ENCODE measurements at regions of chr11 and their contacts with region 1.

Region 1: GRCh38 chr11:116787786-116788486 is at the start of gene ZPR1:
- DNase-seq: peak; percentile 46 to 91
- H3K4me3 ChIP-seq: peak within 1 kb of the TSS; percentile 92 to 93
- H3K27ac ChIP-seq: peak within 1 kb of the TSS; percentile 77 to 90
- H3K4me1 ChIP-seq: peaks cover 0 to 14% of the 10 kb centered on the region in 2 donors
- H3K27me3 ChIP-seq: no peaks in the 10 kb centered on the region
- CTCF ChIP-seq: no peak
- total RNA-seq, gene ZPR1: 171 TPM

Region 2: GRCh38 chr11:115645625-115646317 is 1142.2 kb before region 1 on chr11:
- intact Hi-C with region 1: no loop called
- DNase-seq: no peak
- H3K4me3 ChIP-seq: no peak overlapping the region
- H3K27ac ChIP-seq: no peak overlapping the region
- H3K4me1 ChIP-seq: no peaks in the 10 kb centered on the region
- H3K27me3 ChIP-seq: no peaks in the 10 kb centered on the region
- CTCF ChIP-seq: no peak

Region 3: GRCh38 chr11:116641561-116642045 is 146.3 kb before region 1 on chr11:
- intact Hi-C with region 1: no loop called
- DNase-seq: no peak
- H3K4me3 ChIP-seq: no peak overlapping the region
- H3K27ac ChIP-seq: no peak overlapping the region
- H3K4me1 ChIP-seq: no peaks in the 10 kb centered on the region
- H3K27me3 ChIP-seq: no peaks in the 10 kb centered on the region
- CTCF ChIP-seq: peak in 1 of 3 experiments; percentile 53

Region 4: GRCh38 chr11:116772443-116773202 is 15.3 kb before region 1 on chr11 and contains the start of gene BUD13:
- intact Hi-C with region 1: loop called (anchors 1 kb)
- DNase-seq: peak; percentile 27 to 91
- H3K4me3 ChIP-seq: peak within 1 kb of the TSS; percentile 71 to 82
- H3K27ac ChIP-seq: peak within 1 kb of the TSS; percentile 88 to 94
- H3K4me1 ChIP-seq: peaks cover 0 to 14% of the 10 kb centered on the region in 2 donors
- H3K27me3 ChIP-seq: no peaks in the 10 kb centered on the region
- CTCF ChIP-seq: peak in 1 of 3 experiments; percentile 15
- total RNA-seq, gene BUD13: 23.9 TPM

Region 5: DNA sequence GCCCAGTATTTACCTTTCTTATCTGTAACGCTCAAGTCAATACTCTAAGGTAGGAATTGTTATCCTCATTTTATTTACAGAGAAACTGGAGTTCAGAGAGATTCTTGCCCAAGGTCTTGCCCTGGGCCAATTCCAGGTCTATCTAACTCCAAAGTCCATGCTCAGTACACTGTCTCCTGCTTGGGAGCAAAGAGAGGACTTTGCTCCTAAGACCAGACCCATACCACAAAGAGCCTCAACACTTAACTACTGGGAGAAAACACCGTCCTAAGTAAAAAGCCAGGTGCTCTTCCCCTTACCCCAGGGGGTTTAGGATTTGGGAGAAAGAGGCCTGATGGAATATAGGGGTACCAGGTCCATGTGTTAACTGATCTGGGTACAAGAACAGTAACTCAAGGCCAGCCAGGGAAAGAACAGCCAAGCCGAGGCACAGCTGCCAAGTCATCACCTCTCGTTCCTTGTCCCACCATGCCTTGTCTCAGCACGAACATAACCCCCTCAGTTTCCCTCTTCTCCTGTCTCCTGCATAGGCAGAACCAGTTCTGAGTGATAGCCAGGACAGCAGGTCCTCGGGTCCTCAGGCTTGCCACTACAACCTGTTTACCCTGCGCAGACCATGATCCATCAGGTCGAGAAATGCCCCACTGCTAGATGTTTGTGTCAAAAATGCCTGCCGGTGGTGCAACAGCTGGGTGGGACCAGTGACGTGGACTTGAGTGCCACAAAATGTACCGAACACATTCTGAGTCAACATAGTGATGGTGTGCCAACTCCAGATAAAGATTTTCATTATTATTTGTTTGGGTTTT is 20.7 kb after region 1 on chr11:
- intact Hi-C with region 1: no loop called
- DNase-seq: no peak
- H3K4me3 ChIP-seq: no peak overlapping the region
- H3K27ac ChIP-seq: peak overlapping the region in 1 of 2 donors; percentile 12
- H3K4me1 ChIP-seq: no peaks in the 10 kb centered on the region
- H3K27me3 ChIP-seq: no peaks in the 10 kb centered on the region
- CTCF ChIP-seq: no peak

Region 6: GRCh38 chr11:117098269-117099232 is 310.6 kb after region 1 on chr11 and contains the start of gene SIK3:
- intact Hi-C with region 1: loop called (anchors 1 kb)
- DNase-seq: peak; percentile 62 to 96
- H3K4me3 ChIP-seq: peak within 1 kb of the TSS; percentile 99
- H3K27ac ChIP-seq: peak within 1 kb of the TSS; percentile 90 to 99
- H3K4me1 ChIP-seq: peaks cover 4 to 32% of the 10 kb centered on the region in 2 donors
- H3K27me3 ChIP-seq: no peaks in the 10 kb centered on the region
- CTCF ChIP-seq: peak; percentile 29 to 52 (median 49)
- total RNA-seq, gene SIK3: 22.5 TPM

Region 7: GRCh38 chr11:117143871-117144476 is 356.0 kb after region 1 on chr11 and contains the start of gene PAFAH1B2:
- intact Hi-C with region 1: loop called (anchors 1 kb)
- DNase-seq: peak; percentile 81 to 97
- H3K4me3 ChIP-seq: peak within 1 kb of the TSS; percentile 92 to 98
- H3K27ac ChIP-seq: peak within 1 kb of the TSS; percentile 91 to 95
- H3K4me1 ChIP-seq: peaks cover 3 to 18% of the 10 kb centered on the region in 2 donors
- H3K27me3 ChIP-seq: no peaks in the 10 kb centered on the region
- CTCF ChIP-seq: no peak
- total RNA-seq, gene PAFAH1B2: 60.7 TPM

Region 8: DNA sequence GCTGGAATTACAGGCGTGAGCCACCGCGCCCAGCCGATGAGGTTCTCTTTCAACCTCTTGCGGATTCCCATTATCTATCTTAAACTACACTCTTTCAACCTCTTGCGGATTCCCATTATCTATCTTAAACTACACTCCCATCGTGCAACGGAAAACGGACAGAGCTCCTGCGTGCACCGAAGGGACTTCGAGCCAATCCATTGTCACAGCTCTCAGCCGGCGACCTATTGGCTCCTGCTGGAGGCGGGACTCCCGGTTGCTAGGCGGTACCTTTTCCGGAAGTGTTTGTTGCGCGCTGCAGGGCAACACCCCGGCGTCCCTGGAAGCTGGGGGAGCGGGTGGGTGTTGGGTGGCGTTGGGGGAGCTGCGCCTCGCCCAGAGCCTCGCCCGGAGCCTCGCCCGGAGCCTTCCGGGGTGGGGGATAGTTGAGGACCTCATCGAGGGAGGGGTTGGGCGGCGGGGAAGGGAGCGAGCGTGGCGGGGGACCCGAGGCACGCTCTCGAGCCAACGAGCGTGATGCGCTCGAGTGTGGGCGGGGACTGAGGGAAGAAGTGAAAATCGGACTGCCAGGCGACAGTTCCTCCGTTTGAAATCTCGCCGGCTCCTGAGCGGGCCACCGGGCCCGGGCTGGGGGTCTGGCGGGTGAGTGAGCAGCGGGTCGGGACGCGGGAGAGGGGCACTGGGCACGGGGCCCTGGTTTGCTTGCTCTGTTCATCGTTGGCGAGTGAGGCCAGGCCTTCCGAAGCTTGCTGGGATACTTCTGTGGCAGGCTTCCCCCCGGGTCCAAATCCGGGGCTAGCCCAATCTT is 539.8 kb after region 1 on chr11 and contains the start of gene CEP164:
- intact Hi-C with region 1: loop called (anchors 5 kb)
- DNase-seq: peak; percentile 91 to 98
- H3K4me3 ChIP-seq: peak within 1 kb of the TSS; percentile 82 to 87
- H3K27ac ChIP-seq: peak within 1 kb of the TSS; percentile 88 to 89
- H3K4me1 ChIP-seq: peaks cover 0 to 6% of the 10 kb centered on the region in 2 donors
- H3K27me3 ChIP-seq: no peaks in the 10 kb centered on the region
- CTCF ChIP-seq: no peak
- total RNA-seq, gene CEP164: 15.1 TPM